IMR-90 (cell line): ENCODE measurements at regions of chr3 and their contacts with region 1.

Region 1: DNA sequence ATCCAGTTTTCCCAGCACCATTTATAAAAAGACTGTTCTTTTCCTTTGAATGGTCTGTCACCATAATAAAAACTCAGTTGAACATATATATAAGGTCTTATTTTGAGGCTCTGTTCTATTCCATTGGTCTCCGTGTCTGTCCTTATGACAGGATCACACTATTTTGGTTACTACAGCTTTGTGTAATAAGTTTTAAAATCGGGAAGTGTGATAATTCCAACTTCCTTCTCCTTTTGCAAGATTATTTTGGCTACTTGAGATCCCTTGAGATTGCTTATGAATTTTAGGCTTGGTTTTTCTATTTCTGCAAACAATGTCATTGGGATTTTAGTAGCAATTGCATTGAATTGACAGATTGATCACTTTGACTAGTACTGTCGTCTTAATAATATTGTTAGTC is 35.7 kb downstream of the SACM1L start:
- DNase-seq: no peak
- ATAC-seq: no peak
- H3K4me3 ChIP-seq: no peak overlapping the region
- H3K27ac ChIP-seq: no peak overlapping the region
- H3K4me1 ChIP-seq: no peaks in the 10 kb centered on the region
- H3K27me3 ChIP-seq: no peaks in the 10 kb centered on the region
- CTCF ChIP-seq: no peak
- POLR2A ChIP-seq: no peak
- RAD21 ChIP-seq: no peak

Region 2: GRCh38 chr3:45690336-45691035 is 34.4 kb before region 1 on chr3:
- CTCF ChIA-PET with region 1: no interaction called
- POLR2A ChIA-PET with region 1: no interaction called
- dilution Hi-C with region 1: no loop called
- in situ Hi-C with region 1: no loop called
- intact Hi-C with region 1: loop called (anchors 5 kb)
- DNase-seq: no peak
- ATAC-seq: no peak
- H3K4me3 ChIP-seq: peak overlapping the region; percentile 67
- H3K27ac ChIP-seq: peak overlapping the region; percentile 48; the same call in 1 of the 2 replicates
- H3K4me1 ChIP-seq: peaks cover 5% of the 10 kb centered on the region
- H3K27me3 ChIP-seq: no peaks in the 10 kb centered on the region
- CTCF ChIP-seq: no peak
- POLR2A ChIP-seq: no peak
- RAD21 ChIP-seq: no peak

Region 3: DNA sequence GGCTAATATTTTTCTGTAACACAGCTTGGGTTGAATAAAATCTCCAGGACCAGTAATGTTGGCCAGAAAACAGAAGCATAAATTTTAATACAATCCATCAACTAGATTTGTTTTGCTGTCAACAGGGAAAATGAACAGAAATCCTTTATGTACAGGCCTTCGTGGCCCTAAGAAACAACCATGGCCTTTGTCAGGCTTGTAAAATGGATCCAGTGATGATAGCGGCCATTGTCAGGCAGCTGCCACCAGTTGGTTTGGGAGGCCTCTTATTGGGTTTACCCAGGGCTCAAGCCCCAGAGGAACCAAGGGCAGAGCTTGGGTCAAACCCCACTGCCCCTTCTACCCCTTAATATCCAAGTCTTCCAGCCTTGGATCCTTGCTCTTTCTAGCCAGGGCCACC is 276.3 kb after region 1 on chr3:
- CTCF ChIA-PET with region 1: no interaction called
- POLR2A ChIA-PET with region 1: no interaction called
- dilution Hi-C with region 1: no loop called
- in situ Hi-C with region 1: no loop called
- intact Hi-C with region 1: no loop called
- DNase-seq: no peak
- ATAC-seq: no peak
- H3K4me3 ChIP-seq: no peak overlapping the region
- H3K27ac ChIP-seq: no peak overlapping the region
- H3K4me1 ChIP-seq: peaks cover 2% of the 10 kb centered on the region; the same call in 1 of the 2 replicates
- H3K27me3 ChIP-seq: peaks cover 1% of the 10 kb centered on the region
- CTCF ChIP-seq: no peak
- POLR2A ChIP-seq: no peak
- RAD21 ChIP-seq: no peak